B cell (primary cell): ENCODE measurements at regions of chr20 and their contacts with region 1.

Region 1: DNA sequence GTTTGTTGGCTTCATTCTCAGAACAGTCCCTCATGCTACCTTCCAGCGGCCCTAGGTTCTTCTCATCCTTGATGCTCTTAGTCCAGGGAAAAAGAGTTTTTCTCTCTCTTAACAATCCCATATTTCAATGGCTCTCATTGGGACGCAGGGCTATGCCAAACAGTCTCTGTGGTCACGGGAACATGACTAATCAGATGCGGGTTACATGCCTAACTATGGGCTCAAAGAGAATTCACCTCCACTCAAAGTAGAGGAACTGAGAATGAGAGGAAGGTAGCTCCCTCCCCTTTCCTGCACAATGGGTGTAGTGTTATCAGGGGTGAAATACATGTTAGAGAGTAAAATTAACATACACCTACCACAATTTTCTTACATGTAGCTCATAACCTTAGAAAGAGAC is 18.1 kb upstream of the ATRN start:
- DNase-seq: no peak
- ATAC-seq: no peak
- H3K4me3 ChIP-seq: no peak overlapping the region
- H3K4me3 Mint-ChIP-seq: no peak overlapping the region
- H3K27ac ChIP-seq: no peak overlapping the region
- H3K27ac Mint-ChIP-seq: no peak overlapping the region
- H3K4me1 ChIP-seq: no peaks in the 10 kb centered on the region
- H3K4me1 Mint-ChIP-seq: no peaks in the 10 kb centered on the region
- H3K27me3 ChIP-seq: no peaks in the 10 kb centered on the region
- H3K27me3 Mint-ChIP-seq: peaks cover 36% of the 10 kb centered on the region
- CTCF ChIP-seq: no peak

Region 2: DNA sequence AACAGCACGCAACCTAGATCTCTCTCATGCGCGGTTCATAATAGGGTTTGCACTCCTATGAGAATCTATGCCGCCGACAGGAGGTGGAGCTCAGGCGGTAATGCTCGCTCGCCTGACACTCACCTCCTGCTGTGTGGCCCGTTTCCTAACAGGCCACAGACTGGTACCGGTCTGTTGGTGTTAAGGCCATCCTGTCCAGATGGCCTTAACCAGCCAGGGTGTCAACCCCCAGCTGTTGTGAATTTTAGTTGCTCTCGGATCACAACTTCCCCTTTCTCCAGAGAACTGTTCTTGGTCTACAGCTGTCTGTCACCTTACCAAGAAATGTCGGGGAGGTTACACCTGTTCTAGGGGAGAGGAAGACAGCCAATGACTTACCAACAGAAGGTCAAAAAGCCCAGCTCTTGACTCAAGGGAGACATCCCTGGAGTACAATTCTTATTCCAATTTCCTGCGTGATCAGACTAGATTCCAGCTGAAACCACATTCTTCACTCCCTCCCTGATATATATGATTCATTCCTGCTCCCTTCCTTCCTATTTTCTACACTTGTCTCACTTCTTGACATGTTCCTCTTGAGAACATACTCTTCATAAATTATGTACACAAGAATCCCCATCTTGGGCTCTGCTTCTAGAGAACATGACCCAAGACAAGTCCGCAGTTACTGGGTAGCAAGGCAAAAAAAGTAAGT is 22.2 kb before region 1 on chr20:
- CTCF ChIA-PET with region 1: no interaction called
- POLR2A ChIA-PET with region 1: no interaction called
- intact Hi-C with region 1: no loop called
- DNase-seq: peak; percentile 49
- ATAC-seq: peak; percentile 70
- H3K4me3 ChIP-seq: no peak overlapping the region
- H3K4me3 Mint-ChIP-seq: peak overlapping the region; percentile 38
- H3K27ac ChIP-seq: no peak overlapping the region
- H3K27ac Mint-ChIP-seq: no peak overlapping the region
- H3K4me1 ChIP-seq: peaks cover 6 to 12% of the 10 kb centered on the region in 2 donors
- H3K4me1 Mint-ChIP-seq: peaks cover 11% of the 10 kb centered on the region
- H3K27me3 ChIP-seq: no peaks in the 10 kb centered on the region
- H3K27me3 Mint-ChIP-seq: no peaks in the 10 kb centered on the region
- CTCF ChIP-seq: no peak

Region 3: GRCh38 chr20:3470627-3471396 is 18.1 kb after region 1 on chr20 and contains the start of gene ATRN:
- CTCF ChIA-PET with region 1: no interaction called
- POLR2A ChIA-PET with region 1: interaction called, 12 read pairs
- intact Hi-C with region 1: no loop called
- DNase-seq: peak; percentile 94
- ATAC-seq: peak; percentile 92
- H3K4me3 ChIP-seq: peak within 1 kb of the TSS; percentile 49 to 88 (median 72)
- H3K4me3 Mint-ChIP-seq: peak within 1 kb of the TSS; percentile 90
- H3K27ac ChIP-seq: peak within 1 kb of the TSS; percentile 46 to 72
- H3K27ac Mint-ChIP-seq: peak within 1 kb of the TSS; percentile 88
- H3K4me1 ChIP-seq: peaks cover 25 to 35% of the 10 kb centered on the region in 2 donors
- H3K4me1 Mint-ChIP-seq: peaks cover 36% of the 10 kb centered on the region
- H3K27me3 ChIP-seq: peaks cover 0 to 2% (median under 1%) of the 10 kb centered on the region in 4 experiments
- H3K27me3 Mint-ChIP-seq: peaks cover 6% of the 10 kb centered on the region
- CTCF ChIP-seq: no peak
- total RNA-seq, gene ATRN: 18.3 and 19.5 TPM in 2 replicates